ENCODE measurements at regions of chr9 and their contacts with region 1.

Region 1: GRCh38 chr9:32954642-32955041 is 46.8 kb downstream of the APTX start:
- DNase-seq: no peak
- ATAC-seq: no peak
- H3K4me3 ChIP-seq: no peak overlapping the region
- H3K27ac ChIP-seq: no peak overlapping the region
- H3K4me1 ChIP-seq: no peaks in the 10 kb centered on the region
- H3K27me3 ChIP-seq: no peaks in the 10 kb centered on the region

Region 2: GRCh38 chr9:32899181-32899580 is 55.5 kb before region 1 on chr9:
- intact Hi-C with region 1: loop called in 1 of 4 experiments (anchors 10 kb)
- DNase-seq: no peak
- ATAC-seq: no peak
- H3K4me3 ChIP-seq: no peak overlapping the region
- H3K27ac ChIP-seq: no peak overlapping the region
- H3K4me1 ChIP-seq: no peaks in the 10 kb centered on the region
- H3K27me3 ChIP-seq: no peaks in the 10 kb centered on the region

Region 3: DNA sequence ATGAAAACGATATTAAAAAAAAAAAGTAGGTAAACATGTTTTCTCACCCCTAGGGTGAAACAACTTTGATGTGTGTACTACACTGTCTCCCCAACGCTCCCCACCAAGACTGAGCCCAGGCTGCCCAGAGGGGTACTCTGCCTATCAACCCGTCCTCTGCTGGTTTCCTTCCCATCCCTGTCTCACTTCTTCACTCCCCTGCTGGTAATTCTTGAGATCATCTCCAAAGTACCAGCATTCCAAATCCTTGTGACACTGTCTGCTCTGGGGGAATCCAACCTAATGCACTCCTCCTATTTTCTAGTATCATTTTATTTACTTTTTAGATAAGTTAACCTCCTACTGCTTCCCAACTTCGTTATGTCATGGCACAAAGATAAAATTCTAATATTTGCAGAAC is 53.1 kb after region 1 on chr9:
- intact Hi-C with region 1: no loop called
- DNase-seq: no peak
- ATAC-seq: no peak
- H3K4me3 ChIP-seq: no peak overlapping the region
- H3K27ac ChIP-seq: no peak overlapping the region
- H3K4me1 ChIP-seq: no peaks in the 10 kb centered on the region
- H3K27me3 ChIP-seq: no peaks in the 10 kb centered on the region

Region 4: DNA sequence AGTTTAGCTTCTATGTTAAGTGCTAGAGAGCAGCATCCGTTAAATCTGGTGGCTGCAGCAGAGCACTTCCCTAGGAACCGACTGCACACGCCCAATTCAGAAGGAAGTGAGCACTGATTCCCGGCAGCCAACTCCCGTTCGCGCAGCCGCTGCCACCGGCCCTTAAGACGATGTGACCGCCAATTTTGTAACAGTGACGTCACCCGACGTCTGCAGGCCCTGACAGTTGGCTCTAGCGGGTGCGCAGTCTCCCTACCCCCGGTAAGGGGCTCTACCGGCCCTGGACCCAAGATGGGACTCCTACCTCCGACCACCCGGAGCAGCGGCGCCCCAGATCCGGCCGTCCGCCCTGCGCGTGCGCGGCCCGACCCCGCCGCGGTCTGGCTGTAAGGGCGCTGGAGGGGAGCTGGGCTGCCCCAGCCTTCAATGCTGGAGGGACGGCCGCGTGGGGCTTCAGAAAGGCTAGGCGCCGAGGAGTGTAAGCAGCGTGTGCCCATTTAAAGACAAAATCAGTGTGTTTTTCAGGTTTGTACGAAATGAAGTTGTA is 89.6 kb after region 1 on chr9:
- intact Hi-C with region 1: no loop called
- DNase-seq: peak; percentile 93 to 96 (median 93)
- ATAC-seq: peak; percentile 96
- H3K4me3 ChIP-seq: peak overlapping the region; percentile 89
- H3K27ac ChIP-seq: peak overlapping the region; percentile 98
- H3K4me1 ChIP-seq: peaks cover 2% of the 10 kb centered on the region
- H3K27me3 ChIP-seq: no peaks in the 10 kb centered on the region

Measured in right cardiac atrium (tissue), 5 donors.